Naive thymus-derived CD4-positive, alpha-beta T cell (primary cell): ENCODE measurements at regions of chr7 and their contacts with region 1.

Region 1: GRCh38 chr7:32891800-32892520 is 400 bp upstream of the KBTBD2 start:
- DNase-seq: peak; percentile 91 to 98 (median 96)
- ATAC-seq: peak; percentile 81
- H3K4me3 ChIP-seq: peak overlapping the region; percentile 87
- H3K4me3 Mint-ChIP-seq: peak overlapping the region; percentile 89 to 97 (median 95)
- H3K27ac ChIP-seq: peak overlapping the region; percentile 97
- H3K27ac Mint-ChIP-seq: peak overlapping the region; percentile 97 to 100 (median 99)
- H3K4me1 ChIP-seq: peaks cover 23 to 32% of the 10 kb centered on the region in 2 donors
- H3K4me1 Mint-ChIP-seq: peaks cover 27 to 59% (median 47%) of the 10 kb centered on the region in 7 donors
- H3K27me3 ChIP-seq: no peaks in the 10 kb centered on the region
- H3K27me3 Mint-ChIP-seq: peaks cover 0 to 2% (median 0%) of the 10 kb centered on the region in 5 donors

Region 2: DNA sequence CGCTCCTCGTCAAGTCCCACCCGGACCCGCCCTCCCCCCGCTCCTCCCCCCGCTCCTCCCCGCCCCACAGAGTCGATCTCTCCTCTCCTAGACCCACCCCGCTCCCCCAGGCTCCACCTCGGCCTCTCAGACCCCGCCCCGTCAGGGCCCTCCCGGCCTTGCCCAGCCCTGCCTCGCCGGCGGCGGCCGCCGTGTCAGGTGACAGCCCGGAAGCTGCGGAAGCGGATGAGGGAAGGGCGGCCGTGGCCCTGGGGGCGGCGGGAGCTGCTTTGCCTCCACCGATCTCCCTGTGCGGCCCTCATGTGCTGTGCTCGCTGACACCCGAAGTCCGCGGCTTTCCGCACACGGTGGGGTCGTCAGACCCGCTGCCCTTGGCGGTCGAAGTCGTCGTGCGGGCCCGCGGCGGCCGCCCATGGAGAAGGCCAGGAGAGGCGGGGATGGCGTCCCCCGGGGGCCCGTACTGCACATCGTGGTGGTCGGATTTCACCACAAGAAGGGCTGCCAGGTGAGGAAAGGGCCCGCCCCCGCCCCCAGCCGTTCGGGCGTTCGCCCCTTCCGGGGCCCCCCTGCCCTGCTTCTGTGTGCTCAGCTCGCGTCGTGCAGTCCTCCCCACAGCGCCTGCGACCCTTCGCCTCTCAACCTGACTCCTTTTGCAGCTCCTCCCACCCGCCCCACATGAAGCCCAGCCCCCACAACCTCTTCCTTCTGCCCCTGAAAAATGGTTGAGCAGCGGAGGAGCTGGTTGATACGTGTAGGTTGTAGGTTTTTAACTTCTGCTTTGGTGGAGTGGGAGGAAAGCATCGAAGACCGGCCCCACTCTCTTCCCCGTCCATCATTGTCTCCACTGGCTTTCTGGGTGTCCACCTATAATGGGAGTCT is 396.4 kb before region 1 on chr7 and contains the start of gene AVL9:
- CTCF ChIA-PET with region 1: interaction called, 3 read pairs
- POLR2A ChIA-PET with region 1: interaction called, 7 read pairs
- intact Hi-C with region 1: loop called (anchors 1 kb)
- DNase-seq: peak; percentile 96 to 99 (median 98)
- ATAC-seq: peak; percentile 98
- H3K4me3 ChIP-seq: peak within 1 kb of the TSS; percentile 88
- H3K4me3 Mint-ChIP-seq: peak within 1 kb of the TSS; percentile 86 to 100 (median 96)
- H3K27ac ChIP-seq: peak within 1 kb of the TSS; percentile 96
- H3K27ac Mint-ChIP-seq: peak within 1 kb of the TSS; percentile 92 to 98 (median 97)
- H3K4me1 ChIP-seq: peaks cover 12 to 25% of the 10 kb centered on the region in 2 donors
- H3K4me1 Mint-ChIP-seq: peaks cover 22 to 50% (median 40%) of the 10 kb centered on the region in 7 donors
- H3K27me3 ChIP-seq: no peaks in the 10 kb centered on the region
- H3K27me3 Mint-ChIP-seq: no peaks in the 10 kb centered on the region
- total RNA-seq, gene AVL9: 30.9 to 57.9 (median 45.3) TPM

Region 3: DNA sequence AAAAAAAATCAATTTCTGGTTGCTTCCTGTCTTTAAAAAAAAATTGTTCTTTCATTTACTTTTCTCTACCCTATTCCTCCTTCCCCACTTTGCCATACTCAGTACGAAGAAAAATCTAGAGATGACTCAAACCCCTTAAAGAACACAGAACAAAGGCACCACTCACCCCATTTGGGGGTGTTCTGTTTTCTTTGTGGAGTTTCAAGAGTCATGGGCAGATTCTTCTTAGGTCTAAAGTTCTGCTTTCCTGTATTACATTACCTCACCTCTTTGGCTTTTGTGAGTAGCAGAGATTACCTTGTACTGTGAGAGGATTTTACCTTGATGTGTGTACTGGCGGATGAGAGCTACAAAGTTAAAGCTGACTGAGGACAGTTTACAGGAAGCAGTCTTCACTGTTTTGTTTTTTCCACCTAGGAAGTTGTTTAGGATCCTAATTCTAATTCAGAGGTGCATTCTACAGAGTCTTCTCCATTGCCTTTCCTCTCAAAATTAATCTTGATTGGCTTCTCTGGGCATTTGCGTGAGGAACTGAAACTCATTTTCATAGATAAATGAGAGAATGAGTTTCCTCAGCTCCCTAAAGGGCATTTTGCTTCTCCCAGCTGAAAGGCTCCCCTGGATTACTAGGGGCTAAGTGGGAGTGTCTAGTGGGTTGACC is 375.9 kb before region 1 on chr7:
- CTCF ChIA-PET with region 1: no interaction called
- POLR2A ChIA-PET with region 1: no interaction called
- intact Hi-C with region 1: no loop called
- DNase-seq: peak in 7 of 9 donors; percentile 9 to 45 (median 21)
- ATAC-seq: peak; percentile 68
- H3K4me3 ChIP-seq: no peak overlapping the region
- H3K4me3 Mint-ChIP-seq: peak overlapping the region in 9 of 10 donors; percentile 34 to 90 (median 73)
- H3K27ac ChIP-seq: peak overlapping the region; percentile 24
- H3K27ac Mint-ChIP-seq: peak overlapping the region; percentile 66 to 95 (median 90)
- H3K4me1 ChIP-seq: peaks cover 4 to 28% of the 10 kb centered on the region in 2 donors
- H3K4me1 Mint-ChIP-seq: peaks cover 28 to 78% (median 69%) of the 10 kb centered on the region in 7 donors
- H3K27me3 ChIP-seq: no peaks in the 10 kb centered on the region
- H3K27me3 Mint-ChIP-seq: no peaks in the 10 kb centered on the region

Region 4: DNA sequence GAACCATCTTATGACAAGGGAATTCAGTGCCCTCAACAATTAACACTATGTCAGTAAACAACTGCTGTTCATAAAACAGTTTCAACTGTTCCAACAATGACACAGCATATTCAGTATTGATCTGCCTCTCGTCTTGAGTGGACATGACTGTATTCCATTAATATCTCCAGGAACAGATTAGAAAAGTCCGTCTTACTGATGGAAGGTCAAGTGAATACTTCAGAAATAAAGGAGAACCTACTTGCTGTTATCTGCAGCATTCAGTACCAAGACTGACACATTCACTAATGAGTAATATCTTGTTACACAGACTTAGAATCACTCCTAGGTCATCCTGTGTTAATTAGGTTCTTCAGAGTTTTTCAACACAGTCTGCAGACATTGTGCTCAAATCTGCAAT is 12.5 kb before region 1 on chr7:
- CTCF ChIA-PET with region 1: no interaction called
- POLR2A ChIA-PET with region 1: interaction called, 7 read pairs
- intact Hi-C with region 1: loop called (anchors 1 kb)
- DNase-seq: no peak
- ATAC-seq: peak; percentile 39
- H3K4me3 ChIP-seq: no peak overlapping the region
- H3K4me3 Mint-ChIP-seq: peak overlapping the region in 8 of 10 donors; percentile 0 to 41 (median 19)
- H3K27ac ChIP-seq: no peak overlapping the region
- H3K27ac Mint-ChIP-seq: peak overlapping the region in 8 of 9 donors; percentile 2 to 53 (median 15)
- H3K4me1 ChIP-seq: peaks cover 10 to 18% of the 10 kb centered on the region in 2 donors
- H3K4me1 Mint-ChIP-seq: peaks cover 41 to 83% (median 71%) of the 10 kb centered on the region in 7 donors
- H3K27me3 ChIP-seq: no peaks in the 10 kb centered on the region
- H3K27me3 Mint-ChIP-seq: no peaks in the 10 kb centered on the region

Region 5: DNA sequence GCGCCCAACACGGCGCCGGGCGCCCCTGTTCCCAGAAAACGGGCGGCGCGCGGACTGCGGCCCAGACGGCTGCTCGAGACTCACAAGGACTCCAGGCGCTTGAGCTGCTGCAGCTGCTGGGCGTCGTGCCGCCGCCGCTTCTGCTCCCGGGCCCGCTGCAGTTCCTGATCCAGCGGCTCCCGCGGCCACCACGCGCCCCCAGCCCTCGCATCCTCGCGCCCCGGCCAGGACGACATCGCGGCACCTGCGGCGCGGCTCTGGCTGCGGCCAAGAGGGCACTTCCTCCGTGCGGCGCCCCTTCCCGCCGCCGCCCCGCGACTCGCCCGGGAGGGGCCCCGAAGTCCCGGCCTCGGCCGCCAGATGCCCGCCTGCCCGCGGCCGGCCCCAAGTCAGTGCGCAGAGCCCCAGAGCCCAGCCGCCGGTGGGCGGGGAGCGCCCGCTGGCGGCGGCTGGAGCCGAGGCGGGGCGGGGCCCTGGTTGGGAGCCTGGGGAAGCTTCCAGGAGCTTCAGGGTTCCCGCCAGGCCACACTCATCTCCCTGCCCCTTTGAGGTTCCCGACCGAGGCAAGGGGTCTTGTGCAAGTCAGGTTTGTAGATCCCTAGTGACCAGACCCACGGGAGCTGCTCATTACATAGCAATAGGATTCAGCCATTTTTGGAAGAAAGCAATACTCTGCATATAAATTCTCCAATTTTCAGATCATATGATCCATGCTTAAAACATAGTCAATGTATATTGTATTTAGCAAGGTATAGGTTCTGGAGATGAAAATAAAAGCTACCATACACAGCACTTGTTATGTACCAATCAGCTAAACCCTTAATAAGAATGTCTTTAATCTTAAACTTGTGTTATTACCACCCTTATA is 51.1 kb after region 1 on chr7:
- CTCF ChIA-PET with region 1: interaction called, 21 read pairs
- POLR2A ChIA-PET with region 1: interaction called, 44 read pairs
- intact Hi-C with region 1: loop called (anchors 1 kb)
- DNase-seq: peak; percentile 41 to 80 (median 60)
- ATAC-seq: peak; percentile 94
- H3K4me3 ChIP-seq: peak overlapping the region; percentile 66
- H3K4me3 Mint-ChIP-seq: peak overlapping the region; percentile 61 to 97 (median 87)
- H3K27ac ChIP-seq: peak overlapping the region; percentile 47
- H3K27ac Mint-ChIP-seq: peak overlapping the region in 1 of 9 donors; percentile 58
- H3K4me1 ChIP-seq: peaks cover 0 to 13% of the 10 kb centered on the region in 2 donors
- H3K4me1 Mint-ChIP-seq: peaks cover 7 to 27% (median 11%) of the 10 kb centered on the region in 7 donors
- H3K27me3 ChIP-seq: no peaks in the 10 kb centered on the region
- H3K27me3 Mint-ChIP-seq: peaks cover 0 to 10% (median 0%) of the 10 kb centered on the region in 5 donors

Region 6: GRCh38 chr7:33050535-33051318 is 158.8 kb after region 1 on chr7:
- CTCF ChIA-PET with region 1: interaction called, 3 read pairs
- POLR2A ChIA-PET with region 1: interaction called, 3 read pairs
- intact Hi-C with region 1: loop called (anchors 2 kb)
- DNase-seq: peak in 7 of 9 donors; percentile 31 to 65 (median 56)
- ATAC-seq: peak; percentile 81
- H3K4me3 ChIP-seq: no peak overlapping the region
- H3K4me3 Mint-ChIP-seq: peak overlapping the region in 3 of 10 donors; percentile 7 to 53 (median 23)
- H3K27ac ChIP-seq: no peak overlapping the region
- H3K27ac Mint-ChIP-seq: peak overlapping the region in 8 of 9 donors; percentile 2 to 79 (median 32)
- H3K4me1 ChIP-seq: peaks cover 13 to 18% of the 10 kb centered on the region in 2 donors
- H3K4me1 Mint-ChIP-seq: peaks cover 27 to 83% (median 69%) of the 10 kb centered on the region in 7 donors
- H3K27me3 ChIP-seq: no peaks in the 10 kb centered on the region
- H3K27me3 Mint-ChIP-seq: no peaks in the 10 kb centered on the region

Region 7: GRCh38 chr7:33128990-33129805 is 237.2 kb after region 1 on chr7 and contains the start of gene BBS9:
- CTCF ChIA-PET with region 1: no interaction called
- POLR2A ChIA-PET with region 1: no interaction called
- intact Hi-C with region 1: loop called (anchors 1 kb)
- DNase-seq: peak; percentile 83 to 90 (median 88)
- ATAC-seq: peak; percentile 97
- H3K4me3 ChIP-seq: peak within 1 kb of the TSS; percentile 80
- H3K4me3 Mint-ChIP-seq: peak within 1 kb of the TSS; percentile 94 to 99 (median 97)
- H3K27ac ChIP-seq: peak within 1 kb of the TSS; percentile 78
- H3K27ac Mint-ChIP-seq: peak within 1 kb of the TSS; percentile 84 to 97 (median 91)
- H3K4me1 ChIP-seq: peaks cover 6 to 9% of the 10 kb centered on the region in 2 donors
- H3K4me1 Mint-ChIP-seq: peaks cover 13 to 36% (median 25%) of the 10 kb centered on the region in 7 donors
- H3K27me3 ChIP-seq: no peaks in the 10 kb centered on the region
- H3K27me3 Mint-ChIP-seq: peaks cover 0 to 18% (median 0%) of the 10 kb centered on the region in 5 donors
- total RNA-seq, gene BBS9: 11.7 to 31.0 (median 28.3) TPM